Psoas muscle (tissue), 8 donors: ENCODE measurements at regions of chr6 and their contacts with region 1.

Region 1: DNA sequence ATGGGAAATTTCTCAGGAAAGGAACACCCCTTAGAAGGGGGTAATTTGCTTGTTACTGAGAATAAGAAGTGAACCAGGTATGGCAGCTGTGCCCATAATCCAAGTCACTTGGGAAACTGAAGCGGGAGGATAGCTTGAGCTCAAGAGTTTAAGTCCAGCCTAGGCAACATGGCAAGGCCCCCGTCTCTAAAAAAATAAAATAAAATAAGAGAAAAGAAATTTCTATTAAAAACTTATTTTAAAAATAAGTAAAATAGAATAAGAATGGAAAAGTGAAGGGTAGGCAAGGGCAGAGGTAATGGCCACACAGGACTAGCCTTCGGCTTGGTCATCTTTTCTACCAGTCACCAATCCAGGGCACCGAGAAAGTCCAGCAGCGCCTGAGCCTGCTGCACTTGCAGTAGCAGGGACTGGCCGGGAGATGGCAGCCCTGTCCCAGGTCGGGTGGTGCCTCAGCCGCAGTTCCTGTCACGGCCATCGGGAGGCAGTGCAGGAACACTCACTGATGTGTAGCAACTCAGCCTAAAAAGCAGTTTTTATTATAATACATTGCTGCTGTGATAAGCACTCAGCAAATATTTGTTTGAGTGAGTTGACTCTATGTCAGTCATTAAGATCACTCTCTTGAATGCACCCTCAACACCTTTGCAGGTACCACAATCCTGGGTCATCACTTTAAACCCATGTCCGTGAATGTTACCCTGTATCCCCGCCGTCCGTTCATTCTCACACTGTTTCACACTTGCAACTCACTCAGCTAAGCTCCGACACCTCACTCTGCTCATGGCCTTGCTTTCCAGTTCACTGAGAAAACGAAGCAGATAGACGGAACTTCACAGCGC is 23.2 kb upstream of the GCM1 start:
- DNase-seq: peak; percentile 86 to 92
- ATAC-seq: peak; percentile 96 to 100 (median 99)
- H3K4me3 ChIP-seq: no peak overlapping the region
- H3K27ac ChIP-seq: no peak overlapping the region
- H3K4me1 ChIP-seq: no peaks in the 10 kb centered on the region
- H3K27me3 ChIP-seq: no peaks in the 10 kb centered on the region
- CTCF ChIP-seq: peak; percentile 100

Region 2: DNA sequence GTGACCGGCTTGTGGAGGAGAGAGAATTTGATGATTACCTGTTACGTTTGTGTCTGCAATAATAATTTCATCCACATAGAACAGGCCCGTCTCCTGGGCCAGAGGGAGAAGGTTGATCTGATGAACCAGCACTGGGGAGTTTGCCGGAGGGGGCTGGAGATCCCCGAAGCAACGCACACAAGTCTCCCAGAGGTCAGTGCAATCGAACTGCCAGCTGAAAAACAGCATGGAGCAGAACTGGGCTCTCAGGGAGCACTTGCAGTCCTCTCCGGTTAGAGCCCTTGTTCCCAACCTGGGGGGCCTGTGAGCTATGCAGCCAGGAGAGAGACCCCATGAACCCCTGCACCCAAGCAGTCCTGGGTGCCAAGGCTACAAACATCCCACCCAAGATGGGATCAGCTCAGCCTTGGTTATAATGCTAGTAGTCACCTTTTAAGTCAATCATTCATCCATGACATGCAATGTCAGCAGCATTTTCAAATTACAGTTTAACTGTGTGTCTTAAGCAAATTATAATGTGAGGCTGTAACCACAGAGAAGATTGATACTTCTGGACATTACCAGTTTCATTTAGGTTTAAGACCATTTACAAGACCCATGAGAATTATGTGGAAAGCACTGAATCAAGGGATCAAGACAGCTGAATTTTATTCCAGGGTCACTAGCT is 1118.7 kb before region 1 on chr6:
- intact Hi-C with region 1: no loop called
- DNase-seq: no peak
- ATAC-seq: no peak
- H3K4me3 ChIP-seq: no peak overlapping the region
- H3K27ac ChIP-seq: no peak overlapping the region
- H3K4me1 ChIP-seq: no peaks in the 10 kb centered on the region
- H3K27me3 ChIP-seq: no peaks in the 10 kb centered on the region
- CTCF ChIP-seq: no peak

Region 3: GRCh38 chr6:53233309-53233708 is 61.5 kb after region 1 on chr6:
- intact Hi-C with region 1: no loop called
- DNase-seq: no peak
- ATAC-seq: no peak
- H3K4me3 ChIP-seq: no peak overlapping the region
- H3K27ac ChIP-seq: no peak overlapping the region
- H3K4me1 ChIP-seq: no peaks in the 10 kb centered on the region
- H3K27me3 ChIP-seq: no peaks in the 10 kb centered on the region
- CTCF ChIP-seq: no peak

Region 4: DNA sequence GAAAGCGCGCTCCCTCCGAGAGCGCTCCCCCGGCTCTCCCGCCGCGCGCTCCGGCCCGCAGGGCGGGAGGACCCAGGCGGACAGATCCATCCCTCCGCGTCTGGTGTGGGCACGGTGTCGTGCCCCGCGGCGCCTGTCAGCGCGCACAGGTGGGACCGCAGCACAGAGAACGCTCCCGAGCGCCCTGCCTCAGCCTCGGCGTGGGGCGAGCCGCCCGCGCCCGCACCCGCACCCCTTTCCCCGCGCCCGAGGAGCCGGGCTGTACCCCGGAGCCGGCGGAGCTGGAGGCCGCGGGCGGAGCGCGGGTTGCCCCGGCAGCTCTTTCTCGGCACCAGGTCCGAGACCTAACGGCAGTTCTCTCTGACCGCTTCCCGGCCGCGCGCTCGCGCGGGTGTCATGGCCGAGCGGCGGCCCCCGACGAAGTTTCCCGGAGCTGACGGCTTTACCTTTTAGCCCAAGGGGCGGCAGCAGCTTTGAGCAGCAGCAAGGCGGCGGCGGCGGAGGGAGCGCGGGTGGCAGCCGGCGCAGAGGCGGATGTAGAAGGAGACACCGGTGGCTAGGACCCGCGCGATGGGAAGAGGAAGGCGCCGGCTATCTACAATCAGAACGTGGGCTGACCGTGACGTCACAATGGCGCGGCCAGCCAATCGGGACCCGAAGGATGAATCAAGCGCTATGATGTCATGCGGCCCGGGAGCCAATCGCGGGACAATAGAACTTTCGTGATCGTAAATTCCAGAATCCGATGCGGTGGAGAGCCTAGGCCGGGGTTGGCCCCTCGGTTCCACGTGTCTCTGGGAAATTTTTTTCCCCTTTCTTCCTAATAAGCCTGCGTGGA is 176.8 kb after region 1 on chr6 and contains the start of gene ELOVL5:
- intact Hi-C with region 1: loop called in 1 of 2 experiments (anchors 10 kb)
- DNase-seq: peak; percentile 97
- ATAC-seq: peak; percentile 79 to 90 (median 84)
- H3K4me3 ChIP-seq: peak within 1 kb of the TSS; percentile 89
- H3K27ac ChIP-seq: peak within 1 kb of the TSS; percentile 85
- H3K4me1 ChIP-seq: no peaks in the 10 kb centered on the region
- H3K27me3 ChIP-seq: peaks cover 0 to 46% (median 10%) of the 10 kb centered on the region in 3 donors
- CTCF ChIP-seq: no peak
- total RNA-seq, gene ELOVL5: 5.7 to 14.4 (median 8.7) TPM

Region 5: GRCh38 chr6:53484476-53485280 is 312.9 kb after region 1 on chr6:
- intact Hi-C with region 1: loop called (anchors 1 to 2 kb)
- DNase-seq: no peak
- ATAC-seq: peak; percentile 54 to 87 (median 70)
- H3K4me3 ChIP-seq: peak overlapping the region; percentile 44
- H3K27ac ChIP-seq: no peak overlapping the region
- H3K4me1 ChIP-seq: peaks cover 7% of the 10 kb centered on the region
- H3K27me3 ChIP-seq: no peaks in the 10 kb centered on the region
- CTCF ChIP-seq: peak; percentile 96